ENCODE measurements at regions of chr6 and their contacts with region 1.

Region 1: DNA sequence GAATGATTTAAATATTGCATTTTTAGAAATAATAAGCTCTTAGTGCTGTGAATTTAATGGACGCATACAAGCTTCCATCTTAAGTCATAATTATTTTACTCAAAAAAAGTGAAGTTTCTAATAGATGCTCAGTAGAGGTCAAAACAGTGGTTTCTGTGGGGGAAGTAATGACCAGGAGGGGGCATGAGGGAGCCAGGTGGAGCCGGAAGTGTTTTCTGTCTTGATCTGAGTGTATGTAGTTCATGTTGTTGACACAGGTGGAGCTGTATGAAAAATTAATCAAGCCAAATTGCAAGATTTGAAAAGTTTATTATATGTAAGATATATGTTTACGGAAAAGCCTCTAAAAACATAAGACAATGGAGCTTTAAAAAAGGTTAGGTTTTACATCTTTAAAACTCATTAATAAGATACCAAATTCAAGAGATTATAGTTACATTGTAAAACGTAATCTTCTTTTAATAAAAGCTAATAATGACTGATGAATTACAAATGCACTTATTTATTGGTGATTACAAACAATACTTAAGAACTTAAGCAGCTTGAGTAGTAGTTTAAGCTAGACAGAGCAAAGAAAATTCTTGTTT is 68.0 kb downstream of the PLAGL1 start:
- DNase-seq: peak; percentile 55 to 76
- H3K4me3 ChIP-seq: no peak overlapping the region
- H3K4me3 Mint-ChIP-seq: no peak overlapping the region
- H3K27ac Mint-ChIP-seq: no peak overlapping the region
- H3K4me1 ChIP-seq: no peaks in the 10 kb centered on the region
- H3K4me1 Mint-ChIP-seq: no peaks in the 10 kb centered on the region
- H3K27me3 ChIP-seq: no peaks in the 10 kb centered on the region
- H3K27me3 Mint-ChIP-seq: peaks cover 6% of the 10 kb centered on the region
- CTCF ChIP-seq: peak; percentile 85 to 93

Region 2: DNA sequence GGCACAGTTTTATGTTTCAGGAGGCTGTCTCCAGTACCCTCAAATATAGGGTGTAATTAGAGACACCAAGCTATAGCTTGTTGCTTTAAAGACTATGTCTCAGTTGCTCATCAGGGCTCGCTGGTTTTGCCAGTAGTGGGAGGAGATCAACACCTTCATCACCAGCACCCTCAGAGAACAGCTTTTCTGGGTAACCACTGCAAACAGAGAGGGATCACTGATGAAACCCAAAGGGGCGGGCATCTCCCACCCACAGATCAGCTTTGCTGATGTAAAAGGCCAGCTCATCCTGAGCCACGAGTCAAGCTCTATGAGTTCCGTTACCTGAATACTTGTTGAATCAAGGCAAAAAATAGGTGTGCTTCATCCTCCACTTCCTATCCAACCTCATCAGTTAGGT is 691.7 kb before region 1 on chr6:
- CTCF ChIA-PET with region 1: no interaction called
- POLR2A ChIA-PET with region 1: no interaction called
- intact Hi-C with region 1: no loop called
- DNase-seq: no peak
- H3K4me3 ChIP-seq: no peak overlapping the region
- H3K4me3 Mint-ChIP-seq: no peak overlapping the region
- H3K27ac Mint-ChIP-seq: no peak overlapping the region
- H3K4me1 ChIP-seq: peaks cover 10% of the 10 kb centered on the region
- H3K4me1 Mint-ChIP-seq: peaks cover 7% of the 10 kb centered on the region
- H3K27me3 ChIP-seq: no peaks in the 10 kb centered on the region
- H3K27me3 Mint-ChIP-seq: no peaks in the 10 kb centered on the region
- CTCF ChIP-seq: no peak

Region 3: GRCh38 chr6:143884216-143884900 is 55.7 kb before region 1 on chr6:
- CTCF ChIA-PET with region 1: no interaction called
- POLR2A ChIA-PET with region 1: no interaction called
- intact Hi-C with region 1: no loop called
- DNase-seq: no peak
- H3K4me3 ChIP-seq: no peak overlapping the region
- H3K4me3 Mint-ChIP-seq: no peak overlapping the region
- H3K27ac Mint-ChIP-seq: no peak overlapping the region
- H3K4me1 ChIP-seq: no peaks in the 10 kb centered on the region
- H3K4me1 Mint-ChIP-seq: no peaks in the 10 kb centered on the region
- H3K27me3 ChIP-seq: no peaks in the 10 kb centered on the region
- H3K27me3 Mint-ChIP-seq: peaks cover 8% of the 10 kb centered on the region
- CTCF ChIP-seq: no peak

Region 4: DNA sequence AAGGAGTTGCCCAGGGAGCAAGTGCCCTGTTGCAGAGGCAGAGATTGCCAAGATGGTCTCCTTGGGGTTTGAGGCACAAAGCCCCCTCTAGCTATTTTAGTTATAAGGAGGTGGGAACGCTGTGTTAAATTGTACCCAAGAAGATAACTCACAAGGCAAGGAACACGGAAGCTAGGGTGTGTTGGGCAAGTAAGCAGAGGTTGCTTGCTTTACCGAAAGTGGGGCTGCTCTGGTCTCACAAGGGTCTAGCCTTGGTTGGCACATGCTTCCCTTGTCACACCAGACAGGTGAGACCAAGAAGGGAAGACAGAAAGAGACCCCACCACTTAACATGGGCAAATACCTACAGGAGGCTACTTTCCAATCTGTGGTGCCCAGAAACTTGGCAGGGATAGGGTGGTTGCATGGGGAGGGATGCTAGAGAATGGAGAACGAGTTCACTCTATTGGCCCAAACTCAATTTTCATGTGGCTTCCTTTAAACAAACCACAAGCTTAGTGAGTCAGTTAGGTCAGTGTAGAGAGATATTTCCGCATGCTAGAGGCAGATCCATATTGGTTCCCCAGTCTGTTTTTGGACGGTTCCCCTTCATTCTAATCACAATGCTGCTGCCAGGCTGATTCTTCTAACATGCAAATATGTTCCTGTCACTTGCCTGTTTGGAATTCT is 25.5 kb after region 1 on chr6:
- CTCF ChIA-PET with region 1: interaction called, 6 read pairs
- POLR2A ChIA-PET with region 1: no interaction called
- intact Hi-C with region 1: loop called (anchors 2 kb)
- DNase-seq: no peak
- H3K4me3 ChIP-seq: no peak overlapping the region
- H3K4me3 Mint-ChIP-seq: no peak overlapping the region
- H3K27ac Mint-ChIP-seq: no peak overlapping the region
- H3K4me1 ChIP-seq: peaks cover 16% of the 10 kb centered on the region
- H3K4me1 Mint-ChIP-seq: peaks cover 7% of the 10 kb centered on the region
- H3K27me3 ChIP-seq: no peaks in the 10 kb centered on the region
- H3K27me3 Mint-ChIP-seq: peaks cover 31% of the 10 kb centered on the region
- CTCF ChIP-seq: no peak

Region 5: GRCh38 chr6:144013486-144013909 is 73.4 kb after region 1 on chr6:
- CTCF ChIA-PET with region 1: interaction called, 22 read pairs
- POLR2A ChIA-PET with region 1: no interaction called
- intact Hi-C with region 1: loop called (anchors 1 kb)
- DNase-seq: peak; percentile 63 to 69
- H3K4me3 ChIP-seq: no peak overlapping the region
- H3K4me3 Mint-ChIP-seq: no peak overlapping the region
- H3K27ac Mint-ChIP-seq: no peak overlapping the region
- H3K4me1 ChIP-seq: no peaks in the 10 kb centered on the region
- H3K4me1 Mint-ChIP-seq: no peaks in the 10 kb centered on the region
- H3K27me3 ChIP-seq: no peaks in the 10 kb centered on the region
- H3K27me3 Mint-ChIP-seq: peaks cover 7% of the 10 kb centered on the region
- CTCF ChIP-seq: peak; percentile 77 to 87

Region 6: GRCh38 chr6:144063744-144064401 is 123.8 kb after region 1 on chr6:
- CTCF ChIA-PET with region 1: no interaction called
- POLR2A ChIA-PET with region 1: no interaction called
- intact Hi-C with region 1: loop called (anchors 5 kb)
- DNase-seq: peak; percentile 83 to 89
- H3K4me3 ChIP-seq: peak overlapping the region; percentile 80
- H3K4me3 Mint-ChIP-seq: peak overlapping the region; percentile 90
- H3K27ac Mint-ChIP-seq: no peak overlapping the region
- H3K4me1 ChIP-seq: peaks cover 3% of the 10 kb centered on the region; the same call in 1 of the 2 replicates
- H3K4me1 Mint-ChIP-seq: no peaks in the 10 kb centered on the region
- H3K27me3 ChIP-seq: no peaks in the 10 kb centered on the region; the same call in 1 of the 2 replicates
- H3K27me3 Mint-ChIP-seq: peaks cover 31% of the 10 kb centered on the region
- CTCF ChIP-seq: peak in 1 of 2 experiments; percentile 21

Measured in Caco-2 (cell line).